Activated B cell treated with CpG ODN at 0.5 μM for 24 hours (primary cell): ENCODE measurements at regions of chr3 and their contacts with region 1.

Region 1: GRCh38 chr3:194682694-194683310 is 2.9 kb upstream of the FAM43A start:
- DNase-seq: peak; percentile 43
- ATAC-seq: peak; percentile 62
- H3K4me3 Mint-ChIP-seq: no peak overlapping the region
- H3K27ac Mint-ChIP-seq: peak overlapping the region; percentile 50
- H3K4me1 Mint-ChIP-seq: peaks cover 38% of the 10 kb centered on the region
- H3K27me3 Mint-ChIP-seq: no peaks in the 10 kb centered on the region
- CTCF ChIP-seq: peak; percentile 55

Region 2: DNA sequence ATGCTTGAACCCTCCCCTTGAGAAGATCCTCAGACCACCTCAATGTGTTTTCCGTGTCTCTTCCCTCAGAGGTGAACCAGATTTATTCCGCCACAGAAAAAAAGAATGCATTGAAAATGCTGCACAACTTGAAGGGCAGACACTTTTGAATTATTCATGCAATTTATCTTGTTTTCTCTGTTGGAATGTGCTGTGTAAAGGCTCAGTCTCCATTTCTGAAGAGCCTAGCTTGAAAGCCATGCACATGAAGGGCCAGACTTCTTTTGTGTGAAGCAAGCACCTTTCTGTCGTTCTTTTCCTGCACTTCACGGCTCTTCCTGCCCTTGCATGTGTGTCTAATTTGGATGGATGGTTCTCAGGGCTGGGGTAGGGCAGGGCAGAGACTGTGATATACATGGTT is 1225.3 kb before region 1 on chr3:
- CTCF ChIA-PET with region 1: no interaction called
- POLR2A ChIA-PET with region 1: no interaction called
- intact Hi-C with region 1: no loop called
- DNase-seq: no peak
- ATAC-seq: no peak
- H3K4me3 Mint-ChIP-seq: no peak overlapping the region
- H3K27ac Mint-ChIP-seq: no peak overlapping the region
- H3K4me1 Mint-ChIP-seq: no peaks in the 10 kb centered on the region
- H3K27me3 Mint-ChIP-seq: peaks cover 1% of the 10 kb centered on the region
- CTCF ChIP-seq: no peak

Region 3: DNA sequence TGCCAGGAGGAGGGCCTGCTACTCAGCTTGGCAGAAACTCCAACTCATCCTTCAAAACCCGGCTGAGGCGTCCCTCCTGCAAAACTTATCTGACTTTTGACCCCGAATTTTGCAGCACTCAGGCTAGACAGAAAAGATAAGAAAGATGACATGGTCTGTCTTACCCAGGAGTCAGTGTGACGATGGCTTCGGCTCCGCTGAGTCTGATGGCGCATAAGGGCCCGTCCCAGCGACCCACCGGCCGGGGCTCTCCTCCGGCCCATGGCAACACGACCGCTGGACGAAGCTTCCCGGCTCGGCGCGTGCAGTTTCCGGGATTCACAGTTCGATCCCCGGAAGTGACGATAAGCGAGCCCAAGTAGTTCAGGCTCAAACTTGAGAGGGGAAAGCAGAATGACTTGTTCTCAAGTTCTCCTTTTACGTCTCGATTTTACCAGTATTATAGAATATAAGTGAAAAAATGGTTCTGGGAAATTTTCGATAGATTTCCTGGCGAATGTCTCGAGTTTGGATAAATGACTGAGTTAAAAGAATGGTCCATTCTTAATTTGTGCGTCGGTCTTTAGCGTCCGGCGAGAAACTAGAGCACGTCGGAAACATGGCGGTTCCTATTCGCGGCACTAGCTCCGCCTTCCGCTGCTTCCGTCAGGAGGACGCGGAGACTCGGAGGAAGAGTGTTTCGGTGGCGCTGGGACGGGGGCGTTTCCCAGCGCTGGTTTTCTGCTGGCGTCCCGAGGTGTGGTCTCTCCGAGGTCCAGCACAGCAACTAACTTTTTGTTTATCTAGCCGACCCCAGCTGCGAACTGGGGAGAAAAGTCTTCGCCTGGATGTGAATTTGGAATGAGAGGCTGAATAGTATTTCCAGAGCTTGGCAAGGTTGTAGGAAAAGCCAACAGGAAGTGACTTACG is 10.6 kb before region 1 on chr3 and contains the start of gene LSG1:
- CTCF ChIA-PET with region 1: interaction called, 88 read pairs
- POLR2A ChIA-PET with region 1: interaction called, 127 read pairs
- intact Hi-C with region 1: loop called (anchors 2 kb)
- DNase-seq: peak; percentile 80
- ATAC-seq: peak; percentile 94
- H3K4me3 Mint-ChIP-seq: peak within 1 kb of the TSS; percentile 99
- H3K27ac Mint-ChIP-seq: peak within 1 kb of the TSS; percentile 99
- H3K4me1 Mint-ChIP-seq: peaks cover 22% of the 10 kb centered on the region
- H3K27me3 Mint-ChIP-seq: peaks cover 6% of the 10 kb centered on the region
- CTCF ChIP-seq: no peak
- total RNA-seq, gene LSG1: 55.1 and 55.4 TPM in 2 replicates

Region 4: DNA sequence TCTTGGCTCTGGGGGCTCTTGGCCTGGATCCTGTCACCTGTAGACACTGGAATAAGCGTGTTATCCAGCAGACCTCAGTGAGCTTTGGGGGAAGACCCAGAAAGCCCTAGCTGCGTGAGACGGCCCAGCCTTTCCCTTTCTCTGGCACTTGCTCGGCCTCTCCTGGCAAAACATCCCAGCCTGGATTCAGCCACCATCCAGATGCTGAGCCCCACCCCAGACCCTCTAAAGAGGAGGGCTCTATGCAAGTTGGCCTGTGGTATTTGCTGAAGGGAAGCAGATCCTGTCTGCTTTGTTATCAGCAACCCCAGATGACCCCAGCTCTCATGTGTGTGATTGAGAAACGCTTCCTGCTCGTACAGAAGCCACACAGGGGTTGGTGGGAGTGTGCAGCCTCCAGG is 270.0 kb after region 1 on chr3:
- CTCF ChIA-PET with region 1: interaction called, 29 read pairs
- POLR2A ChIA-PET with region 1: interaction called, 5 read pairs
- intact Hi-C with region 1: loop called (anchors 1 kb)
- DNase-seq: no peak
- ATAC-seq: no peak
- H3K4me3 Mint-ChIP-seq: no peak overlapping the region
- H3K27ac Mint-ChIP-seq: no peak overlapping the region
- H3K4me1 Mint-ChIP-seq: no peaks in the 10 kb centered on the region
- H3K27me3 Mint-ChIP-seq: no peaks in the 10 kb centered on the region
- CTCF ChIP-seq: no peak

Region 5: GRCh38 chr3:195106418-195106906 is 423.7 kb after region 1 on chr3:
- CTCF ChIA-PET with region 1: interaction called, 176 read pairs
- POLR2A ChIA-PET with region 1: interaction called, 30 read pairs
- intact Hi-C with region 1: loop called (anchors 1 kb)
- DNase-seq: peak; percentile 86
- ATAC-seq: peak; percentile 98
- H3K4me3 Mint-ChIP-seq: peak overlapping the region; percentile 67
- H3K27ac Mint-ChIP-seq: peak overlapping the region; percentile 61
- H3K4me1 Mint-ChIP-seq: peaks cover 35% of the 10 kb centered on the region
- H3K27me3 Mint-ChIP-seq: no peaks in the 10 kb centered on the region
- CTCF ChIP-seq: peak; percentile 94

Region 6: DNA sequence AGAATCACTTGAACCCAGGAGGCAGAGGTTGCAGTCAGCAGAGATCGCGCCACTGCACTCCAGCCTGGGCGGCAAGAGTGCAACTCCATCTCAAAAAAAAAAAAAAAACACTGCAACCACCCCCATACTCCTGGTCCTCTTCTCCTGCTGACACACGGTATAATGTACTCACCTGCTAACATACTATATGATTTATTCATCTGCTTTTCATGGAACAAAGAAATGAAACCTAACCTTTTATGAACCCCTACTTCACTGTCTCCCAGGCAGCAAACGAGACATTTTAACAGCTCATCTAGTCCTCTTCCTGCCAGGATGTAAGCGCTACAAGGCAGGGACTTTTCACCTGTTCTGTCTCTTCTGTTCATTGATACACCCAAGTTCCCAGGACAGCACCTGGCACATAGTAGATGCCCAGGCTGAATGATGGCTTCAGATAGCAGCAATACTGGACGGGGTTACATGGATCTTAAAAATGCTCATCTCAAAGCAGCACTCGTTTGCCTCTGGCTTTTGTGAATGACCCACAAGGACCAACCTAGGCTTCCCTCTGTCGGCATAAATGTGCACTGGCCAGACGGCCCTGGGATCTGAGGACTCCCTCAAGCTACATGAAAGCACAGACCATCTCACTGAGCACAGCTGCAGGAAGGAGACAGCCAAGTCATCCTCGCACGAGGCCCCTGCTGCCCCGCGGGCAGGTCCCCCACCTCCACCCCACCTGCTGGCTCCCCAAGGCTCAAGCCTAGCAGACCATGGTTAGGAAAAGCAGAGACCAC is 567.9 kb after region 1 on chr3:
- CTCF ChIA-PET with region 1: interaction called, 13 read pairs
- POLR2A ChIA-PET with region 1: interaction called, 8 read pairs
- intact Hi-C with region 1: no loop called
- DNase-seq: no peak
- ATAC-seq: peak; percentile 52
- H3K4me3 Mint-ChIP-seq: no peak overlapping the region
- H3K27ac Mint-ChIP-seq: no peak overlapping the region
- H3K4me1 Mint-ChIP-seq: peaks cover 22% of the 10 kb centered on the region
- H3K27me3 Mint-ChIP-seq: no peaks in the 10 kb centered on the region
- CTCF ChIP-seq: no peak

Region 7: GRCh38 chr3:195522254-195523023 is 839.6 kb after region 1 on chr3:
- CTCF ChIA-PET with region 1: interaction called, 10 read pairs
- POLR2A ChIA-PET with region 1: no interaction called
- intact Hi-C with region 1: loop called (anchors 1 kb)
- DNase-seq: no peak
- ATAC-seq: peak; percentile 10
- H3K4me3 Mint-ChIP-seq: no peak overlapping the region
- H3K27ac Mint-ChIP-seq: peak overlapping the region; percentile 22
- H3K4me1 Mint-ChIP-seq: peaks cover 13% of the 10 kb centered on the region
- H3K27me3 Mint-ChIP-seq: no peaks in the 10 kb centered on the region
- CTCF ChIP-seq: peak; percentile 85

Region 8: DNA sequence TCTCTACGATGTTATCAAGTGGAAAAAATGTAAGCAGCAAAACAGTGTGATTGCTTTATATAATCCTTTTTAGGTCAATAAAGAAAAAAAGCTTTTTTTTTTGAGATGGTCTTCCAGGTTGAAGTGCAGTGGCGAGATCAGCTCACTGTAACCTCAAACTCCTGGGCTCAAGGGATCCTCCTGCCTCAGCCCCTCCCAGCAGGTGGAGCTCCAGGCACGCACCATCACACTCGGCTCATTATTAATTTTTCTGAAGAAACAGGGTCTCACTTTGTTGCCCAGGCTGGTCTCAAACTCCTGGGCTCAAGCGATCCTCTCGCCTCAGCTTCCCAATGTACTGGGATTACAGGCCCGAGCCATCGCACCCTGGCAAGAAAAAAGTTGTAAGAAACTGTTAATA is 1803.5 kb after region 1 on chr3:
- CTCF ChIA-PET with region 1: no interaction called
- POLR2A ChIA-PET with region 1: no interaction called
- intact Hi-C with region 1: no loop called
- DNase-seq: no peak
- ATAC-seq: no peak
- H3K4me3 Mint-ChIP-seq: no peak overlapping the region
- H3K27ac Mint-ChIP-seq: no peak overlapping the region
- H3K4me1 Mint-ChIP-seq: no peaks in the 10 kb centered on the region
- H3K27me3 Mint-ChIP-seq: no peaks in the 10 kb centered on the region
- CTCF ChIP-seq: no peak